ENCODE measurements at regions of chrX and their contacts with region 1.

Region 1: GRCh38 chrX:49884290-49884862 is 5.1 kb downstream of the USP27X start:
- DNase-seq: peak; percentile 62
- H3K4me3 Mint-ChIP-seq: no peak overlapping the region
- H3K27ac Mint-ChIP-seq: no peak overlapping the region
- H3K4me1 Mint-ChIP-seq: peaks cover 4% of the 10 kb centered on the region
- H3K27me3 Mint-ChIP-seq: peaks cover 26% of the 10 kb centered on the region
- CTCF ChIP-seq: peak; percentile 69

Region 2: DNA sequence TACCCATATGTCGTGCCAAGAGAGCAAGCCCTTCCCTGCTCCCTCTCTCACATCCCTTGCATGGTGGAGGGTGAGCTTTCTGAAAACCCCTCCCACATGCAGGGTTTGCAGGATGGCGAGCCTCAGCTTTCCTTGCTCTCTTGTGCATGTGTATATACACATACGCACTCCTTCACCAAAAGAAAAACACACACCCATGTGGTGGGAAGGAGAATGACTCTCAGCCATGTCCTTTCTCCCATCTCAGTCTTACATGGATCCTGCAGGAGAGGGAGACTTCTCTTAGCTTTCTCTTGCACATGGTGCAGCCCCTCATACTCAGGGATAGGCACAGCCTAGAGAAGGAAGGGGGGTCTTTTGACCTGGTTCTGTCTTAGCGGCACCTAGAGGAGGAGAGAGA is 119.1 kb after region 1 on chrX:
- CTCF ChIA-PET with region 1: no interaction called
- POLR2A ChIA-PET with region 1: no interaction called
- intact Hi-C with region 1: no loop called
- DNase-seq: no peak
- H3K4me3 Mint-ChIP-seq: no peak overlapping the region
- H3K27ac Mint-ChIP-seq: no peak overlapping the region
- H3K4me1 Mint-ChIP-seq: no peaks in the 10 kb centered on the region
- H3K27me3 Mint-ChIP-seq: peaks cover 63% of the 10 kb centered on the region
- CTCF ChIP-seq: no peak

Region 3: GRCh38 chrX:50081282-50081889 is 197.0 kb after region 1 on chrX:
- CTCF ChIA-PET with region 1: no interaction called
- POLR2A ChIA-PET with region 1: no interaction called
- intact Hi-C with region 1: loop called (anchors 1 kb)
- DNase-seq: peak; percentile 23
- H3K4me3 Mint-ChIP-seq: no peak overlapping the region
- H3K27ac Mint-ChIP-seq: no peak overlapping the region
- H3K4me1 Mint-ChIP-seq: no peaks in the 10 kb centered on the region
- H3K27me3 Mint-ChIP-seq: peaks cover 58% of the 10 kb centered on the region
- CTCF ChIP-seq: peak; percentile 8

Region 4: GRCh38 chrX:50579955-50580354 is 695.6 kb after region 1 on chrX:
- CTCF ChIA-PET with region 1: interaction called, 9 read pairs
- POLR2A ChIA-PET with region 1: no interaction called
- intact Hi-C with region 1: loop called (anchors 1 kb)
- DNase-seq: peak; percentile 79
- H3K4me3 Mint-ChIP-seq: no peak overlapping the region
- H3K27ac Mint-ChIP-seq: no peak overlapping the region
- H3K4me1 Mint-ChIP-seq: no peaks in the 10 kb centered on the region
- H3K27me3 Mint-ChIP-seq: peaks cover 68% of the 10 kb centered on the region
- CTCF ChIP-seq: peak; percentile 68